Heart left ventricle (tissue), 16 donors: ENCODE measurements at regions of chr1 and their contacts with region 1.

Region 1: DNA sequence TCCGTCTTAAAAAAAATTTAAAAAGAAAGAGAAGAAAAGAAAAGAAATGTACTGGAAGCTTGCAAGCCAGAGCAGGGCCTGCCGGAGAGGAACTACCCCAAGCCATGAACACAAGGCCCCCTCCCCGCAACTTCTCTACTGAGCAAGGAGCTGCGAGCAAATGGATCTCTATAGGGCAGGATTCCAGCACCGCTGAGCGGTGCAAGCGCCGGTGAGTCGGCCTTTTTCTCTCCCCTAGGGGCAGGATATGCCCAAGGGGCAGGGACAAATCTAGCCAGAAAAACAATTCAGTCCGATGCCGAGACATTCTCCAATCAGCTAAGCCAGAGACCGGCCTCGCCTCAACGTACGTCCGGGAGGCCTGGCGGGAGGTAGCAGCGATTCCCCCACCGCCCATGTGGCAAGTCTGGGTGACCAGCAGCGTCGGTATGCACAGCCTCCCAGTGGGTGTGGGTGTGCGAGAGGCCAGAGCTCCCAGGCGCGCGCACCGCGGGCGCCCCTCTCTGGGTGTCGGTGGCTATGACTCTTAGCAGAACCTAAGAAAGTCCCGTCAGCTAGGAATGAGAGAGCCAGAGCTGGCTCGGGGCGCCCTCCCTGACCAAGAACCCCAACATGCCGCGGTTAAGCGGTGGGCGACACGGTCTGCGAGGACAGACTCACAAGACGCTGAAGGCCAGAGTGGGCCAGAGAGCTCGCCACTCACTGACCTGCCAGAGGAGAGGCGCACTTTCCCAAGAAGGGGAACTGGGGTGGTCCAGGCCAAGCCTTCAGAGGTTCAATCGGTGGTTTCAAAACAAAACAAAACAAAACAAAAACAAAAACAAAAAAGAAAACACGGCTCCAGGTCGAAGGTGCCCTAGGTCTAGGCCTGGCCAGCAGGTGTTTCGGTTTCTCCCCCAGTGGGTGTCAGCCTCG is 1.9 kb downstream of the CSMD2 start:
- DNase-seq: peak; percentile 48 to 77 (median 66)
- ATAC-seq: peak; percentile 89 to 96 (median 92)
- H3K4me3 ChIP-seq: peak overlapping the region; percentile 16 to 56 (median 42)
- H3K27ac ChIP-seq: no peak overlapping the region
- H3K4me1 ChIP-seq: peaks cover 2 to 42% (median 18%) of the 10 kb centered on the region in 12 donors
- H3K27me3 ChIP-seq: peaks cover 8 to 78% (median 55%) of the 10 kb centered on the region in 9 donors
- CTCF ChIP-seq: peak; percentile 14 to 69 (median 54)
- POLR2A ChIP-seq: no peak

Region 2: GRCh38 chr1:33633019-33633801 is 529.9 kb before region 1 on chr1:
- intact Hi-C with region 1: loop called in 6 of 10 experiments (anchors 5 to 10 kb)
- DNase-seq: peak; percentile 88 to 93 (median 89)
- ATAC-seq: peak; percentile 35 to 89 (median 84)
- H3K4me3 ChIP-seq: no peak overlapping the region
- H3K27ac ChIP-seq: no peak overlapping the region
- H3K4me1 ChIP-seq: peaks cover 0 to 11% (median 0%) of the 10 kb centered on the region in 12 donors
- H3K27me3 ChIP-seq: peaks cover 0 to 19% (median 0%) of the 10 kb centered on the region in 9 donors
- CTCF ChIP-seq: peak; percentile 94 to 100 (median 97)
- POLR2A ChIP-seq: no peak

Region 3: DNA sequence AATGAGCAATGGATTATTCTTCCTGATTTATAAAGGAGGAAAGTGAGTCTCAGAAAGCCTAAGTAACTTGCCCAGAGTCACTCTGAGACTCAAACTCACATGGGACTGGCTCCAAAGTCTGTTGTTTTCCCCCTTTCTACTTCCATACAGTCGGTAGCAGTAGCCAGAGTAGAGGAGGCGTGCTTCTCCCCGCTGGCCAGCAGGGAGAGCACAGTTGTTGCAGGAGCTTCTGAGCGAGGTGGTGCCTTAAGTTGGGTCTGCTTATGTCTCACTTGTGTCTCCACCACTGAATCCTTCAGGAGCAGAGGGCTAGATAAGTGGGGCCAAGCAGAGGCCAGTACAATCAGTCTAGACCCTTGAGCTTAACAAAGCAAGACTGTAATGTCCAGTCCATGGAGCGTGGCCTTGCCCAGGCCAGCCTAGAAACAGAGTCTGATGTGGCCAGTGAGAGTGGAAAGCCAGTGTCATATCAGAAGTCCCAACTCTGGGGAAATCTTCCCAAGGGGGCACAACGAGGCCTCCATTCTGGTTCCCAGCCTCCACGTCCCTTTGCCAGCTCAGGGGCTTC is 508.8 kb before region 1 on chr1:
- intact Hi-C with region 1: loop called in 1 of 10 experiments (anchors 10 kb)
- DNase-seq: no peak
- ATAC-seq: peak in 2 of 4 donors; percentile 17 to 31
- H3K4me3 ChIP-seq: no peak overlapping the region
- H3K27ac ChIP-seq: peak overlapping the region in 4 of 12 donors; percentile 4 to 62 (median 38)
- H3K4me1 ChIP-seq: peaks cover 0 to 18% (median 5%) of the 10 kb centered on the region in 12 donors
- H3K27me3 ChIP-seq: no peaks in the 10 kb centered on the region
- CTCF ChIP-seq: peak in 7 of 12 donors; percentile 12 to 46 (median 30)
- POLR2A ChIP-seq: no peak

Region 4: DNA sequence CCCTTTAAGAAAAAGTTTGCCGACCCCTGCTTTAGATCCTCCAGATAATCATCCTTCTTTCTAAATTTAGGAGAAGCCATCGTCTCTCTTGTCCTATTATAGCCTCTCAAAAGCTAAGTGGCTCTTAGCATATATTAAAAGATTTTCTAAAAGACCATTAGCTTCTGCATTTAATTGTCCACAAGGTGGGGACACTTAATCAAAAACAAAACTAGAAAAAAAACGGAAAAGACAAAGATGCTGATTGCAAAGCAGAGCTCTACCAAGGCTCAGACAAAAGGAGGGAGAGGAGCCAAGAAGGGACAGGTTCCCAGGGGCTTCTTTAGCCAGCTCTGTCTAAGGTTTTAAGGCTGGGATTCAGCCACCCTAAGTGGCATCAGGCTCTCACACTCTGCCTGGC is 427.5 kb before region 1 on chr1:
- intact Hi-C with region 1: loop called in 3 of 10 experiments (anchors 5 to 10 kb)
- DNase-seq: no peak
- ATAC-seq: no peak
- H3K4me3 ChIP-seq: no peak overlapping the region
- H3K27ac ChIP-seq: no peak overlapping the region
- H3K4me1 ChIP-seq: no peaks in the 10 kb centered on the region
- H3K27me3 ChIP-seq: peaks cover 0 to 8% (median 0%) of the 10 kb centered on the region in 9 donors
- CTCF ChIP-seq: peak in 10 of 12 donors; percentile 5 to 45 (median 38)
- POLR2A ChIP-seq: no peak

Region 5: GRCh38 chr1:33876970-33877650 is 286.0 kb before region 1 on chr1:
- intact Hi-C with region 1: loop called in 1 of 10 experiments (anchors 10 kb)
- DNase-seq: peak in 4 of 5 donors; percentile 33 to 81 (median 54)
- ATAC-seq: peak in 2 of 4 donors; percentile 60 to 91
- H3K4me3 ChIP-seq: no peak overlapping the region
- H3K27ac ChIP-seq: peak overlapping the region in 1 of 12 donors; percentile 4
- H3K4me1 ChIP-seq: peaks cover 0 to 13% (median 0%) of the 10 kb centered on the region in 12 donors
- H3K27me3 ChIP-seq: peaks cover 0 to 8% (median 0%) of the 10 kb centered on the region in 9 donors
- CTCF ChIP-seq: no peak
- POLR2A ChIP-seq: no peak